ENCODE measurements at regions of chr7 and their contacts with region 1.

Region 1: DNA sequence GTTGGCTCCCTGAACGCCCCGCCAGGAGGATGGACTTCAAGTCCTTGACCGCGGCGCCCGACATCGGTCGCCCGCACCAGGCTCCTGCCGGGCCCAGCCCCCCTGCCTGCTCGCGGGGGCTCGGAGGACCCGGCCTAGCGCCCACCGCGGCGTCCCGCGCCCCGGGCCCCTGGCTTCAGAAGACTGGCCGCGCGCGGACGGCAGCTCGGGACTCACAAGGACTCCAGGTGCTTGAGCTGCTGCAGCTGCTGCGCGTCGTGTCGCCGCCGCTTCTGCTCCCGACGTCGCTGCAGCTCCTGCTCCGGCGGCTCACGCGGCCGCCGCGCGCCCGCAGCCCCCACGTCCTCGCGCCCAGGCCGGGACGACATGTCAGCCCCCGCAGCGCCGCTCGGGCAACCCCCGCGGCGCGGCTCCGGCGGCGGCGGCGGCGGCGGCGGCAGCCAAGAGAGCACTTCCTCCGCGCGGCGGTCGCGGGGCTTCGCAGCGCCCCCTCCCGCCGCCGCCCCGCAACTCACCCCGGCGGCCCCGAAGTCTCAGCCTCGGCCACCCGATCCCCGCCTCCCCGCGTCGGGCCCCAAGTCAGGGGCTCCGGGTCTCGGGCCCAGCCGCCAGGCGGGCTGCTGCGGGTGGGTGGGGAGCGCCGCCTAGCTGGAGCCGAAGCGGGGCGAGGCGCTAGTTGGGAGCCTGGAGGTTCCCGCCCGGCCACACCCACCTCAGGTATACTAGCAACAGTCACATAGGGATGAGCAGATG is at the start of gene RP9:
- DNase-seq: peak in 1 of 2 experiments; percentile 80
- H3K4me3 ChIP-seq: peak within 1 kb of the TSS; percentile 69
- H3K27ac ChIP-seq: peak within 1 kb of the TSS; percentile 4
- H3K4me1 ChIP-seq: peaks cover 24% of the 10 kb centered on the region
- H3K27me3 ChIP-seq: 0 out of 2 replicates have a peak, but pooled peaks cover 10% of the 10 kb centered on the region
- CTCF ChIP-seq: peak; percentile 62; the same call in 1 of the 2 replicates
- total RNA-seq, gene RP9: 15.4 and 22.1 TPM in 2 replicates

Region 2: GRCh38 chr7:32490127-32490822 is 618.9 kb before region 1 on chr7 and contains the start of gene LSM5:
- CTCF ChIA-PET with region 1: no interaction called
- POLR2A ChIA-PET with region 1: no interaction called
- intact Hi-C with region 1: loop called (anchors 1 kb)
- DNase-seq: peak; percentile 89 to 91
- H3K4me3 ChIP-seq: peak within 1 kb of the TSS; percentile 67
- H3K27ac ChIP-seq: peak within 1 kb of the TSS; percentile 66
- H3K4me1 ChIP-seq: peaks cover 23% of the 10 kb centered on the region
- H3K27me3 ChIP-seq: no peaks in the 10 kb centered on the region
- CTCF ChIP-seq: no peak
- total RNA-seq, gene LSM5: 97.5 and 104 TPM in 2 replicates

Region 3: GRCh38 chr7:32761451-32762205 is 347.6 kb before region 1 on chr7:
- CTCF ChIA-PET with region 1: no interaction called
- POLR2A ChIA-PET with region 1: no interaction called
- intact Hi-C with region 1: loop called (anchors 2 kb)
- DNase-seq: no peak
- H3K4me3 ChIP-seq: no peak overlapping the region
- H3K27ac ChIP-seq: no peak overlapping the region
- H3K4me1 ChIP-seq: no peaks in the 10 kb centered on the region
- H3K27me3 ChIP-seq: no peaks in the 10 kb centered on the region
- CTCF ChIP-seq: no peak

Region 4: DNA sequence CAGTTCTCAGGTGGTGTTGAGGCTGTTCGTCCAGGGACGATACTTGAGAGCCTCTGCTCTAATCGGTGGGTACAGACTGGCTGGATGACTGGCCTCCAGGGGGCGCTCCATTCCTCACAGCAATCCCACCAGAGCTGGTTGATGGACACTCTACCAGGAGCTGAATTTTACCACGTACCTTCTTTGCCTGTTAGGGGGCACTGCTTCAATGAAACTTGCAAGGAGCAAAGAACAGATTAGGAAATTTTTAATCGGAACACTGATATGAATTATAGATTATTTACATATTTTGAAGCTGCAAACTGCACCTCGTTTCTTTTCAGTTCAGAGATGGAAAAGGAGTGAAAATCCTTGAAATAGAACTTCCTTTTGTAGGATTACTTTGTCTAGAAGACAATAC is 262.5 kb before region 1 on chr7:
- CTCF ChIA-PET with region 1: interaction called, 6 read pairs
- POLR2A ChIA-PET with region 1: no interaction called
- intact Hi-C with region 1: loop called (anchors 5 kb)
- DNase-seq: peak; percentile 72 to 76
- H3K4me3 ChIP-seq: no peak overlapping the region
- H3K27ac ChIP-seq: no peak overlapping the region
- H3K4me1 ChIP-seq: no peaks in the 10 kb centered on the region
- H3K27me3 ChIP-seq: no peaks in the 10 kb centered on the region
- CTCF ChIP-seq: peak; percentile 97

Region 5: GRCh38 chr7:33128990-33129805 is 20.0 kb after region 1 on chr7 and contains the start of gene BBS9:
- CTCF ChIA-PET with region 1: no interaction called
- POLR2A ChIA-PET with region 1: no interaction called
- intact Hi-C with region 1: loop called (anchors 1 kb)
- DNase-seq: peak; percentile 92 to 95
- H3K4me3 ChIP-seq: peak within 1 kb of the TSS; percentile 58
- H3K27ac ChIP-seq: no peak within 1 kb of the TSS
- H3K4me1 ChIP-seq: peaks cover 9% of the 10 kb centered on the region; the same call in 1 of the 2 replicates
- H3K27me3 ChIP-seq: no peaks in the 10 kb centered on the region
- CTCF ChIP-seq: no peak
- total RNA-seq, gene BBS9: 12.4 and 13.1 TPM in 2 replicates

Region 6: DNA sequence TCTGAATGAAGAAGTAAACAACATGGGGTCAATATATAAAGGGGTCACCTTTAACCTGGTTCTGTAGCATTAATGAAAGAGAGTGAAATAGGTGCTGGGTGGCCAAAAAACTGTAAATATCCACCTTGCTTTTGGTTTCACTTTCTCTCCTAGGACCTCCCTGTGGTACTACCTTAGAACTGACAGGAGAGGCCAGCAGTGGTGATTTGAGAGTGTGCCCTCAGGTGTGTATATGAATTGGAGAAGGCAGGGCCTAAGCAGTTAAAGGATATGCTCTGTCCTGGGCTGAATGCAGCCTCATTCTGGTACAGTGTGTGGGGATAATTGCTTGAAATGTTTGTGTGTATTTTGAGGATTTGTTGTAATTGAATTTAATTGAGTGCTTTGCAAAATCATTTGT is 82.2 kb after region 1 on chr7:
- CTCF ChIA-PET with region 1: no interaction called
- POLR2A ChIA-PET with region 1: no interaction called
- intact Hi-C with region 1: no loop called
- DNase-seq: peak in 1 of 2 experiments; percentile 29
- H3K4me3 ChIP-seq: no peak overlapping the region
- H3K27ac ChIP-seq: no peak overlapping the region
- H3K4me1 ChIP-seq: no peaks in the 10 kb centered on the region
- H3K27me3 ChIP-seq: no peaks in the 10 kb centered on the region
- CTCF ChIP-seq: no peak; the same call in 1 of the 2 replicates